Tibial artery (tissue), 4 donors: ENCODE measurements at regions of chr10 and their contacts with region 1.

Region 1: GRCh38 chr10:4849555-4850242 is 23.7 kb downstream of the AKR1E2 start:
- DNase-seq: peak; percentile 90 to 93
- H3K4me3 ChIP-seq: no peak overlapping the region
- H3K27ac ChIP-seq: peak overlapping the region; percentile 44 to 50
- H3K4me1 ChIP-seq: peaks cover 0 to 34% (median 18%) of the 10 kb centered on the region in 4 donors
- H3K27me3 ChIP-seq: no peaks in the 10 kb centered on the region
- CTCF ChIP-seq: peak; percentile 95 to 100

Region 2: DNA sequence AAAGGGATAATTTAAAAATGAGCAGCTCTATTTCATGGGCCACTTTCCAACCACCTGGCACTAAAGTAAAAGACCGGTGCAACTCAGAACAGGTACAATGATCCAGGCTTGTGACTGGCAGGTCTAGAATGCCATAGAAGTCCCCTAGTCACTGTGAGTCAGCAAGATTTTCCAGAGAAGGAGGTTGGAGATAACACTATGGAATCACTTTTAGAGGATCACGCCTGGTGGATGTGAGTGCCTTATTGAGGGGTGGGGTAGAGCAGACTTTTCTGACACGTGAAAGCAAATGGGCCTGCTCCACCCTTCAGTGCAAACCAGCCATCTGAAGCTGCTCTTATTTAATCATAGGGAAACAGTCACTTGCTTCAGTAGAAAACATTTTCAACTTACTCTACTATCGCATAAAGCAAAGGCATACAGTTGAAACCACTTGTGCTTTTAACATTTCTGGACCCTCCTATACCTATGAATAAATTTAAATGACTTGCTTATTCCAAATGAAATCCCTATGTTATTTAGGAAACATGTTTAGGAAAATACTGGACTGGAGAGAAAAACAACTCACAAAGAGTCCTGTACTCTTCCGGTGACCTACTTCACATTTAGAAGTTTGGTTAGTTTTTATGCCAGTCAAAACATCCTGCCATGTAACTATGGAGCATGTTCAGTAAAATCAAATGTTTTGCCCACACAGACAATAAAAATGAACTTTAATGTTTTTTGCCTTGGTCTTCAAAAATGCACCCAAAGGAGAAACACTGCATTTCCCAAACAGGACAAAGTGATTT is 92.0 kb after region 1 on chr10:
- intact Hi-C with region 1: loop called (anchors 5 kb)
- DNase-seq: no peak
- H3K4me3 ChIP-seq: no peak overlapping the region
- H3K27ac ChIP-seq: peak overlapping the region; percentile 68 to 79
- H3K4me1 ChIP-seq: peaks cover 0 to 63% (median 39%) of the 10 kb centered on the region in 4 donors
- H3K27me3 ChIP-seq: no peaks in the 10 kb centered on the region
- CTCF ChIP-seq: no peak

Region 3: DNA sequence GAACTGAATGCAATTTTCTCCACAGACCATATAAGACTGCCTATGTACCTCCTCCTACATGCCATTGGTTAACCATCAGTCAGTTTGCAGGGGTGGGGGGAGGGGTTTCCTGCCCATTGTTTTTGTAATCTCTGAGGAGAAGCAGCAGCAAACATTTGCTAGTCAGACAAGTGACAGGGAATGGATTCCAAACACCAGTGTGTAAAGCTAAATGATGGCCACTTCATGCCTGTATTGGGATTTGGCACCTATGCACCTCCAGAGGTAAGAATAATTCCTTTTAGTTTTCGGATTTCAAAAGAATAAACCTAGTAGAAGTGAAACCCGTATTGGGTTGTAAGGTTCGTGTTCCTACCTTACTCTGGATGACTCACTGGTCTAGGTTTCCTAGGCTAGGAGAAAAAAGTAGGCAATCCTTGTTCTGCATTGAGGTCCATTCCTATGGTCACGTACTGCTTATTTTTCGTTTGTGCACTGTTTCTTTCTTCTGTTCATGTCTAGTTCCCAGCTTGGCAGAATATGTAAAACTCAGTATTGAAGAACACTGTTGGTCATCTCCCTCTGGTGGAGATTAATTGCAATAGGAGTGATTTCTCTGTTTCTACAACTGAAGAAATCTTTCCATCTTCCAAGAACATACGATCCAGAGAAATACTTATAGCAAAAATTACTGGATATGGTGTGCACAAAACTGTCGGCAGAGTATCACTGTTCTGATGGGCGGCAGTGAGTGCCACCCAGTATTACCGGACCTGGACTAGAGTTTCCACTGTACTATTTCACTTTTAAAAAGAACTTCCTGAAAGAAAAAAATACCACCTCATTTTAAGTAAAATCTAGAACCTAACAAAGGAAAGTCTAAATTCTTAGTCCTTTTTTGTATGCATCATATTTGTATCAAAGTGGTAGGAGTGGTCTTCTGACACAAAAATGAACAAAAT is 244.8 kb after region 1 on chr10 and contains the start of gene AKR1C3:
- intact Hi-C with region 1: loop called (anchors 5 kb)
- DNase-seq: no peak
- H3K4me3 ChIP-seq: peak within 1 kb of the TSS; percentile 49 to 51
- H3K27ac ChIP-seq: peak within 1 kb of the TSS; percentile 31 to 67
- H3K4me1 ChIP-seq: no peaks in the 10 kb centered on the region
- H3K27me3 ChIP-seq: no peaks in the 10 kb centered on the region
- CTCF ChIP-seq: peak; percentile 66 to 87

Region 4: DNA sequence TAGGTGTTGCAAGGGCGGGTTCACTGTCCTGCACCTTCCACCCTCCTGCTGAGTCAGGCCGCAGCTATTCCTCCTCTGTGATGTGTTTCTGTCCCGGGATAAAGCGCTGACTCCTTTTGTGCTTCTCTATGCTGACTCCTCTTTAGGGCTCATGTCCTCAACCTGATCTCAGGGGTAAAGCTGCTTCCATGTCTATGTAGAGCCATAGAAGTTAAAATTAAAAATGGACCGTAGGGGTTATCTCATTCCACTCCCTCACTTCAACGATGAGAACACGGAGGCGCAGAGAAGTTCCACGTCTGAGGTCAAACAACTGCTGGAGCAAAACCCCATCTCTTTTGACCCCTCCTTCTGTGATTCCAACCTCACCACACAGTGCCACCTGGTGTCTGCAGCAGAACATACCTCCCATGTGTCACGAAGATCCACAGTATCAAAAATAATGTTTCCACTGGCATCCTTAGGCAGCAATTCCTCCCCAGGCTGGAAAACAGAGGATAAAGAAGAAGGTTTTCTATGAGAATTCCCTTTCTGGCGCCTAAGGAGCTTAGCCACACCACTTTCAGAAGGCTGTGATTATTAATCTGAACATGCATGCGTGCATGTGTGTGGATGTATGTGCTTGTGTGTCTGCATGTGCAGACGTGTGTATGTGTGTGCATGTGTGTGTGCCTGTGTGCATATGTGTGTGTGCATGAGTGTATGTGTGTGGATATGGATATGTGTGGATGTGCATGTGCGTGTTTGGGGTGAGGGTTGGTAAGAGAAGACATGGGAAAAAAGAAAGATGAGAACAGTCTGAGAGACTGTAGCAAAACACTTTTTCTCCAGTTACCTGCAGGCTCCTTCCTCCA is 433.8 kb after region 1 on chr10:
- intact Hi-C with region 1: loop called (anchors 5 kb)
- DNase-seq: peak; percentile 59 to 73
- H3K4me3 ChIP-seq: no peak overlapping the region
- H3K27ac ChIP-seq: no peak overlapping the region
- H3K4me1 ChIP-seq: peaks cover 0 to 4% (median 0%) of the 10 kb centered on the region in 4 donors
- H3K27me3 ChIP-seq: peaks cover 0 to 2% of the 10 kb centered on the region in 2 donors
- CTCF ChIP-seq: peak; percentile 65 to 70

Region 5: DNA sequence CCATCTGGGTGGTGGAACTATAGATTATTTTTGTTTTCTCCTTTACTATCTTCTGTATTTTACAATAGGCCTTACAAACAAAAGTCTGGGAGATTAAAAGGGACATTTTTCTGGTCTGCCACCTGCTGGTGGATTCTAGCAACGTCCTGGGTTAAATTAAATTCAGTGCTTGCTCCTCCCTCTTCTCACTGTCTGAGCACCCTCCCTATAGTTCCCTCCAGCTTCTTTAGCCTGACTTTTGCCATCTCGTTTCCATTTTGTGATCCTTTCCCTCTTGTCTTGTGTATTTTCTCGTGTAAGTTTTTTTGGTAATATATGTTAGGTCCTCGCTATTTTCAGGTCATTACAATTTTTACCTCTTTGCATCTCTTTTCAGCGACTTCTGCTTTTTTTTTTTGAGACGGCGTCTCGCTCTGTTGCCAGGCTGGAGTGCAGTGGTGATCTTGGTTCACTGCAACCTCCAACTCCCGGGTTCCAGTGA is 1023.9 kb after region 1 on chr10:
- intact Hi-C with region 1: no loop called
- DNase-seq: peak; percentile 62 to 74
- H3K4me3 ChIP-seq: no peak overlapping the region
- H3K27ac ChIP-seq: no peak overlapping the region
- H3K4me1 ChIP-seq: no peaks in the 10 kb centered on the region
- H3K27me3 ChIP-seq: no peaks in the 10 kb centered on the region
- CTCF ChIP-seq: peak; percentile 70 to 73